Activated CD4-positive, alpha-beta memory T cell treated with anti-CD3 and anti-CD28 coated beads for 36 hours (primary cell): ENCODE measurements at regions of chr12 and their contacts with region 1.

Region 1: DNA sequence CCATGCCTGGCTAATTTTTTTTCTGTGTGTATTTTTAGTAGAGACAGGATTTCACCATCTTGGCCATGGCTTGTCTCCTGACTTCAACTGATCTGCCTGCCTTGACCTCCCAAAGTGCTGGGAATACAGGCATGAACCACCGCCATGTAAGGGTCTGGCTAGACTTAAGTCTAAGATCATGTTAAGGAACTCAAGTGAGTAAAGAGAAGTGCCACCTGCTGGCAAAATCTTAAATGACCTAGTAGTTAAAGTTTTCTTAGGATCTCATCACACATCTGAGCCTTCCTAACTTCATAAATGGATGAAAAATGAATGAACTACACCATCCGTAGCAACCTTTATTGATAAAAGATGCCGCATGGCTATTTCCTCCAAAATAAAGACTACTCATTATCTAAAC is 1.7 kb upstream of the C12orf56 start:
- DNase-seq: no peak
- H3K4me3 Mint-ChIP-seq: no peak overlapping the region
- H3K27ac Mint-ChIP-seq: no peak overlapping the region
- H3K4me1 Mint-ChIP-seq: peaks cover 7% of the 10 kb centered on the region
- H3K27me3 Mint-ChIP-seq: no peaks in the 10 kb centered on the region

Region 2: GRCh38 chr12:63826006-63826585 is 566.1 kb before region 1 on chr12:
- CTCF ChIA-PET with region 1: no interaction called
- POLR2A ChIA-PET with region 1: no interaction called
- intact Hi-C with region 1: loop called (anchors 5 kb)
- DNase-seq: no peak
- H3K4me3 Mint-ChIP-seq: no peak overlapping the region
- H3K27ac Mint-ChIP-seq: no peak overlapping the region
- H3K4me1 Mint-ChIP-seq: peaks cover 6% of the 10 kb centered on the region
- H3K27me3 Mint-ChIP-seq: peaks cover 13% of the 10 kb centered on the region

Region 3: GRCh38 chr12:64273527-64274403 is 118.5 kb before region 1 on chr12:
- CTCF ChIA-PET with region 1: no interaction called
- POLR2A ChIA-PET with region 1: no interaction called
- intact Hi-C with region 1: loop called (anchors 1 kb)
- DNase-seq: peak; percentile 36
- H3K4me3 Mint-ChIP-seq: no peak overlapping the region
- H3K27ac Mint-ChIP-seq: no peak overlapping the region
- H3K4me1 Mint-ChIP-seq: no peaks in the 10 kb centered on the region
- H3K27me3 Mint-ChIP-seq: peaks cover 2% of the 10 kb centered on the region

Region 4: GRCh38 chr12:64486657-64487056 is 94.4 kb after region 1 on chr12:
- CTCF ChIA-PET with region 1: no interaction called
- POLR2A ChIA-PET with region 1: no interaction called
- intact Hi-C with region 1: no loop called
- DNase-seq: no peak
- H3K4me3 Mint-ChIP-seq: no peak overlapping the region
- H3K27ac Mint-ChIP-seq: no peak overlapping the region
- H3K4me1 Mint-ChIP-seq: peaks cover 12% of the 10 kb centered on the region
- H3K27me3 Mint-ChIP-seq: no peaks in the 10 kb centered on the region

Region 5: GRCh38 chr12:64890873-64891468 is 498.8 kb after region 1 on chr12:
- CTCF ChIA-PET with region 1: no interaction called
- POLR2A ChIA-PET with region 1: no interaction called
- intact Hi-C with region 1: no loop called
- DNase-seq: no peak
- H3K4me3 Mint-ChIP-seq: no peak overlapping the region
- H3K27ac Mint-ChIP-seq: no peak overlapping the region
- H3K4me1 Mint-ChIP-seq: peaks cover 1% of the 10 kb centered on the region
- H3K27me3 Mint-ChIP-seq: peaks cover 19% of the 10 kb centered on the region